ENCODE measurements at regions of chr1 and their contacts with region 1.

Region 1: GRCh38 chr1:201877877-201878401 is 10.8 kb upstream of the SHISA4 start:
- DNase-seq: peak; percentile 52 to 57
- H3K4me3 ChIP-seq: no peak overlapping the region
- H3K4me3 Mint-ChIP-seq: no peak overlapping the region
- H3K27ac Mint-ChIP-seq: no peak overlapping the region
- H3K4me1 ChIP-seq: no peaks in the 10 kb centered on the region
- H3K4me1 Mint-ChIP-seq: peaks cover 14% of the 10 kb centered on the region
- H3K27me3 ChIP-seq: no peaks in the 10 kb centered on the region
- H3K27me3 Mint-ChIP-seq: no peaks in the 10 kb centered on the region
- CTCF ChIP-seq: peak; percentile 58 to 71

Region 2: DNA sequence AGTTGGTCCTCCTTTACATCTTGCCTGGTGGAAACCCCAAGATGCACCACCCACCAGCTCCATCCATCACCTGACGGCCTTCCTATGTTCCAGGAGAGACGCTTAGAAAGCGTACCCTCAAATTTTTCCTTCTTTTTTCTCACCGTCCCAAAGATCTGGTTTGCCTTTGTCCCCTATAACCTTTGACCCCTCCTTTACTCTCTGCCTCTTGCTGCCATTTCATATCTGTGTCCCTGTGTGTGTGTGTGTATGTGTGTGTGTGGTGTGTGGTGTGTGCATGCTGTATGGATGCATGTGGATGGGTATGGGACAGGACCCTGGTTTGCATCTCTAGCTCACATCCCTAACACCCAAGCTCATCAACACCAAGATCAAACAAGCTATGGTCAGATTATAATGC is 71.1 kb before region 1 on chr1:
- CTCF ChIA-PET with region 1: no interaction called
- POLR2A ChIA-PET with region 1: no interaction called
- intact Hi-C with region 1: no loop called
- DNase-seq: no peak
- H3K4me3 ChIP-seq: no peak overlapping the region
- H3K4me3 Mint-ChIP-seq: no peak overlapping the region
- H3K27ac Mint-ChIP-seq: no peak overlapping the region
- H3K4me1 ChIP-seq: no peaks in the 10 kb centered on the region
- H3K4me1 Mint-ChIP-seq: no peaks in the 10 kb centered on the region
- H3K27me3 ChIP-seq: no peaks in the 10 kb centered on the region
- H3K27me3 Mint-ChIP-seq: peaks cover 4% of the 10 kb centered on the region
- CTCF ChIP-seq: no peak

Region 3: GRCh38 chr1:201970334-201971159 is 92.6 kb after region 1 on chr1:
- CTCF ChIA-PET with region 1: interaction called, 10 read pairs
- POLR2A ChIA-PET with region 1: no interaction called
- intact Hi-C with region 1: loop called (anchors 1 kb)
- DNase-seq: no peak
- H3K4me3 ChIP-seq: no peak overlapping the region
- H3K4me3 Mint-ChIP-seq: no peak overlapping the region
- H3K27ac Mint-ChIP-seq: no peak overlapping the region
- H3K4me1 ChIP-seq: no peaks in the 10 kb centered on the region
- H3K4me1 Mint-ChIP-seq: no peaks in the 10 kb centered on the region
- H3K27me3 ChIP-seq: no peaks in the 10 kb centered on the region
- H3K27me3 Mint-ChIP-seq: peaks cover 3% of the 10 kb centered on the region
- CTCF ChIP-seq: no peak

Region 4: GRCh38 chr1:202112839-202113672 is 235.1 kb after region 1 on chr1:
- CTCF ChIA-PET with region 1: no interaction called
- POLR2A ChIA-PET with region 1: no interaction called
- intact Hi-C with region 1: loop called (anchors 5 kb)
- DNase-seq: peak in 1 of 2 experiments; percentile 28
- H3K4me3 ChIP-seq: no peak overlapping the region
- H3K4me3 Mint-ChIP-seq: peak overlapping the region; percentile 16
- H3K27ac Mint-ChIP-seq: peak overlapping the region; percentile 81
- H3K4me1 ChIP-seq: peaks cover 49% of the 10 kb centered on the region
- H3K4me1 Mint-ChIP-seq: peaks cover 26% of the 10 kb centered on the region
- H3K27me3 ChIP-seq: no peaks in the 10 kb centered on the region
- H3K27me3 Mint-ChIP-seq: no peaks in the 10 kb centered on the region
- CTCF ChIP-seq: no peak

Region 5: GRCh38 chr1:202135221-202135721 is 257.3 kb after region 1 on chr1:
- CTCF ChIA-PET with region 1: no interaction called
- POLR2A ChIA-PET with region 1: no interaction called
- intact Hi-C with region 1: loop called (anchors 1 kb)
- DNase-seq: peak; percentile 66 to 69
- H3K4me3 ChIP-seq: no peak overlapping the region
- H3K4me3 Mint-ChIP-seq: no peak overlapping the region
- H3K27ac Mint-ChIP-seq: no peak overlapping the region
- H3K4me1 ChIP-seq: peaks cover 21% of the 10 kb centered on the region
- H3K4me1 Mint-ChIP-seq: no peaks in the 10 kb centered on the region
- H3K27me3 ChIP-seq: no peaks in the 10 kb centered on the region
- H3K27me3 Mint-ChIP-seq: no peaks in the 10 kb centered on the region
- CTCF ChIP-seq: peak; percentile 85 to 89

Region 6: DNA sequence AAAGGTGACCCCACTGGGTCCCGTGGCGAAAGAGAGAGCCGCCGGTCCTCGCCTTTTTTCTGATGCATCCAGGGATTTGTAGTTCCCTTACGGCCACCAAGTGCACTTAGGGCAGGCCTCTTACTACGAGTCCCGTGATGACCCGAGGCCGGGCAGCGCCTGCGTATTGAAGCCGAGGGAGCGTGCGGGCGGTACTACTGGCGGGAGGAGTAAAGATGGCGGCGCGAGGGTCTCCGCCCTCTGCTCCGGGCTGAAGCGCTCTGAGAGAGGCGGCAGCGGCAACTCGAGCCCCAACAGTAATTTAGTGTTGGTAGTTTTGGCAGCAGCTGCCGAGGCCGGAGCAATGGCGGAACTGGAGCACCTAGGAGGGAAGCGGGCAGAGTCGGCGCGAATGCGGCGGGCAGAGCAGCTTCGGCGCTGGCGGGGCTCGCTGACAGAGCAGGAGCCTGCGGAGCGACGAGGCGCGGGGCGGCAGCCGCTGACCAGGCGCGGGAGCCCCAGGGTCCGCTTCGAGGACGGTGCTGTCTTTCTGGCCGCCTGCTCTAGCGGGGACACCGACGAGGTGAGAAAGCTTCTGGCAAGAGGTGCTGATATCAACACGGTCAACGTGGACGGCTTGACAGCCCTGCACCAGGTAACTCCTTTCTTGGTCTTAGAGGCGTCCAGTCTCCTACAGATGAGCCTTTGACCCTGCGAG is 470.7 kb after region 1 on chr1 and contains the start of gene PPP1R12B:
- CTCF ChIA-PET with region 1: no interaction called
- POLR2A ChIA-PET with region 1: no interaction called
- intact Hi-C with region 1: no loop called
- DNase-seq: peak; percentile 97 to 99
- H3K4me3 ChIP-seq: peak within 1 kb of the TSS; percentile 77
- H3K4me3 Mint-ChIP-seq: peak within 1 kb of the TSS; percentile 100
- H3K27ac Mint-ChIP-seq: peak within 1 kb of the TSS; percentile 98
- H3K4me1 ChIP-seq: peaks cover 9% of the 10 kb centered on the region
- H3K4me1 Mint-ChIP-seq: peaks cover 36% of the 10 kb centered on the region
- H3K27me3 ChIP-seq: no peaks in the 10 kb centered on the region
- H3K27me3 Mint-ChIP-seq: no peaks in the 10 kb centered on the region
- CTCF ChIP-seq: no peak
- total RNA-seq, gene PPP1R12B: 16.4 and 22.4 TPM in 2 replicates